ENCODE measurements at regions of chr17 and their contacts with region 1.

Region 1: DNA sequence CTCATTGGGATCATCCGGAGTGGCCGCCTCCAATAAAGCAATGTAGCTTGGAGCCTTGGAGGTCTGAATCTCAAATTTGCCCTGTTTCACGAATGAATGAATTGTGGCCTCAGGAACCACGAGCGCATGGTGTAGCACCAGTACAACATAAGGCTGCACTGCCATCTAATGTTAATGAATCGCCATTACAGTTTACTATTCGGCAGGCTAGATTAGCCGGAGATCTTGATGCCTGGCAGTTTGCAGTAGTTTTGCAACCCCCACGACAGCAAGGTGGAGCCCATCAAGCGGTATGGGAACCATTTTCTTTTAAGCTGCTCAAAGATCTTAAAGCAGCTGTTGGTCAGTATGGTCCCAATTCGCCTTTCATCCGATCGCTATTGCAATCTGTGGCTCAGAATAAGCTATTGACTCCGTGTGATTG is 18.8 kb downstream of the ALOX15B start:
- DNase-seq: peak; percentile 79
- CTCF ChIP-seq: peak; percentile 74

Region 2: GRCh38 chr17:7862692-7863437 is 194.8 kb before region 1 on chr17:
- CTCF ChIA-PET with region 1: interaction called, 19 read pairs
- POLR2A ChIA-PET with region 1: no interaction called
- DNase-seq: peak; percentile 34
- CTCF ChIP-seq: peak; percentile 71

Region 3: GRCh38 chr17:7931709-7932482 is 125.8 kb before region 1 on chr17 and contains the starts of genes CNTROB and TRAPPC1:
- CTCF ChIA-PET with region 1: interaction called, 11 read pairs
- POLR2A ChIA-PET with region 1: no interaction called
- DNase-seq: peak; percentile 100
- CTCF ChIP-seq: no peak

Region 4: GRCh38 chr17:8041249-8041928 is 16.3 kb before region 1 on chr17:
- CTCF ChIA-PET with region 1: interaction called, 37 read pairs
- POLR2A ChIA-PET with region 1: no interaction called
- DNase-seq: peak; percentile 65
- CTCF ChIP-seq: peak; percentile 47

Region 5: DNA sequence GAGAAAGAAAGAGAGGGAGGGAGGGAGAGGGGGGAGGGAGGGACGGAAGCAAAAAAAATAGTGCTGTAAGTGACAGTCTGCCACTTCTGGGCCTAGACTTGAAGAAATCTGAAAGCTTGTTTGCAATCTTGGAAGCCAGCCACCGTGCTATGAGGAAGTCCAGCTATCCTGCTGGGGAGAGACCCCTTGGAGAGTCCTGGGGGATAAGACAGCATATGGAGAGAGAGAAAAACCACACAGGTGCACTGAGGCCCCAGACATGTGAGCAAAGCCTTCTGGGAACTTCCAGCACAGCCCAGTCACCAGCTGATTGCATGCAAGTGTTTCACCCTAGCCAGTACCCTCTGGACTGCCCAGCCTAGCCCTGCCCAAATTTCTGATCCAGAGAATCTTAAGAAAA is 42.4 kb after region 1 on chr17:
- CTCF ChIA-PET with region 1: interaction called, 107 read pairs
- POLR2A ChIA-PET with region 1: no interaction called
- DNase-seq: no peak
- CTCF ChIP-seq: no peak

Region 6: GRCh38 chr17:8222630-8223356 is 165.1 kb after region 1 on chr17:
- CTCF ChIA-PET with region 1: no interaction called
- POLR2A ChIA-PET with region 1: no interaction called
- DNase-seq: peak; percentile 73
- CTCF ChIP-seq: no peak